K562 (cell line): ENCODE measurements at regions of chr12 and their contacts with region 1.

Region 1: GRCh38 chr12:6613776-6614512 is 6.8 kb upstream of the CHD4 start:
- DNase-seq: peak; percentile 82 to 95 (median 87)
- ATAC-seq: peak; percentile 89
- H3K4me3 ChIP-seq: no peak overlapping the region
- H3K27ac ChIP-seq: peak overlapping the region; percentile 85
- H3K4me1 ChIP-seq: peaks cover 29 to 43% of the 10 kb centered on the region in 2 experiments
- H3K27me3 ChIP-seq: no peaks in the 10 kb centered on the region
- CTCF ChIP-seq: peak; percentile 24 to 44 (median 27); a peak in 2 of 6 replicates
- EP300 ChIP-seq: no peak
- POLR2A ChIP-seq: peak; percentile 52
- RAD21 ChIP-seq: 0 out of 4 replicates have a peak, but pooled peaks have one; percentile 9 to 11

Region 2: GRCh38 chr12:6443361-6443983 is 170.5 kb before region 1 on chr12:
- CTCF ChIA-PET with region 1: no interaction called
- POLR2A ChIA-PET with region 1: no interaction called
- in situ Hi-C with region 1: no loop called
- intact Hi-C with region 1: no loop called
- DNase-seq: no peak
- ATAC-seq: no peak
- H3K4me3 ChIP-seq: no peak overlapping the region
- H3K27ac ChIP-seq: no peak overlapping the region
- H3K4me1 ChIP-seq: no peaks in the 10 kb centered on the region; a peak in 1 of 5 replicates
- H3K27me3 ChIP-seq: peaks cover 0 to 9% of the 10 kb centered on the region in 2 experiments; a peak in 4 of 5 replicates
- CTCF ChIP-seq: no peak
- EP300 ChIP-seq: no peak
- POLR2A ChIP-seq: no peak
- RAD21 ChIP-seq: no peak

Region 3: DNA sequence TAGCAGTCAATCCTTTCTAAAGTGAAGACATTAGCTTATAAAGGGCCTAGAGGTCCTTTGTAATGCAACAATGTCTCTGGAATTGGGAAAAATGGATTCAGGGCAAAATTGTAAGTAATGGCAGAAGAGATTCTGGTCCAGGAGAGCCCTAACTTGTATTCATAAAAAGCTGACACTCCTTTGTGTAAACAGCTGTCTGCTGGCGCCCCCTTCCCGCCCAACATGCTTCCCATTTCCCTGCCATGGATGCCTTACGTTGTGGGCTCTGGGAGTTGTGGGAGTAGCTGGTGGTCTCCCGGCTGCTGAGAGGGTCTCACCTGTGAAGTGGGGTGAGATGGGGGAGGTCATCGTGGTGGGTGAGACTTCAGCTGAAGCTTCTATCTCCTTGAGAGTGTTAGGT is 31.0 kb after region 1 on chr12:
- CTCF ChIA-PET with region 1: interaction called, 3 read pairs
- POLR2A ChIA-PET with region 1: no interaction called
- in situ Hi-C with region 1: no loop called
- intact Hi-C with region 1: loop called (anchors 1 kb)
- DNase-seq: no peak
- ATAC-seq: peak; percentile 54; the same call in 1 of the 3 replicates
- H3K4me3 ChIP-seq: no peak overlapping the region
- H3K27ac ChIP-seq: no peak overlapping the region
- H3K4me1 ChIP-seq: peaks cover 13 to 14% of the 10 kb centered on the region in 2 experiments; a peak in 4 of 5 replicates
- H3K27me3 ChIP-seq: no peaks in the 10 kb centered on the region
- CTCF ChIP-seq: peak; percentile 10 to 53 (median 28); a peak in 2 of 6 replicates
- EP300 ChIP-seq: no peak
- POLR2A ChIP-seq: no peak
- RAD21 ChIP-seq: peak; percentile 12 to 59; a peak in 2 of 4 replicates